ENCODE measurements at regions of chr15 and their contacts with region 1.

Region 1: DNA sequence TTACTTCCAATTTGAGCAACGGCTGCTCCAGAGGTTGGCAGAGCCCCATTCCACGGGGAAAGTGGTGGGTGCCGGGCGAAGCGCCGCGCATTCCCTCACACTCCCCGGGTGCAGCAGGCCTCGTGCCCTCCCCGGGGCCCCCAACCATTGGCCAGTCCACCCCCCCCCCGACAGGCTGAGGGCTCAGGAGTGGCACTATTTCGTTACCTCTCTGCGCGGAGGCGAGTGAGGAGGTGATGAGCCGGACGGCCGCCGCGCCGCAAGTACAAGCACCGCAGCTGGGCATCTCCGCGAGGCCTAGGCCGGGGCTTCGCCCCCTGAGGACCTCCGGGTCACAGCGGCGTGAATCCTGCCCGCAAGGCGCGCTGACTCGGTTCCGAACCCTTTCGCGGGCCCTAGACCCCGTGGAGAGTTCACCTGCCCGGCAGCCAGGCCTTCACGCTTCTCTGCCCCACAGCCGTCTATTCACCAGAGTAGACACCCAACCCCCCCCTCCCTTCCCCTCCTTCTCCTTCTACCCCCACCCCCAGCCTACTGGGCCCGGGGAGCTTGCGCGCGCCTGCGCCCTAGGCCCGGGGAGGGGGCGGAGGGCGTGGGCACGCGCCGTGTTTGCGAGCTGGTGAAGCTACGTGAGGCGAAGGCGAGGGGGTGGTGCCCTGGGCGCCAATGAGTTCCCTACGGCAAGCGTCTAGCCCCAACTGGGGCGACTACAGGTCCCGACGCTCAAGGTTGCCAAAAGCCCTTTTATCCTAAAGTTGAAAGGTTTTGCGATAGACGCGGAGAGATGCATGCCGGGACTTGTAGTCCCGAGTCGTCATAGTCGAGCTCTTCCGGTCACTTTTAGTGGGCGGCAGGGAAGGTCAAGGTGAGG is at the start of gene CLPX:
- DNase-seq: peak; percentile 88
- H3K4me3 Mint-ChIP-seq: peak within 1 kb of the TSS; percentile 96
- H3K27ac Mint-ChIP-seq: peak within 1 kb of the TSS; percentile 94
- H3K4me1 Mint-ChIP-seq: peaks cover 23% of the 10 kb centered on the region
- H3K27me3 Mint-ChIP-seq: no peaks in the 10 kb centered on the region
- total RNA-seq, gene CLPX: 62.7 to 69.9 TPM

Region 2: GRCh38 chr15:64515196-64515595 is 669.9 kb before region 1 on chr15:
- CTCF ChIA-PET with region 1: no interaction called
- intact Hi-C with region 1: no loop called
- DNase-seq: no peak
- H3K4me3 Mint-ChIP-seq: peak overlapping the region; percentile 61
- H3K27ac Mint-ChIP-seq: peak overlapping the region; percentile 75
- H3K4me1 Mint-ChIP-seq: peaks cover 70% of the 10 kb centered on the region
- H3K27me3 Mint-ChIP-seq: no peaks in the 10 kb centered on the region

Region 3: GRCh38 chr15:65008983-65009382 is 176.1 kb before region 1 on chr15:
- CTCF ChIA-PET with region 1: no interaction called
- intact Hi-C with region 1: no loop called
- DNase-seq: no peak
- H3K4me3 Mint-ChIP-seq: no peak overlapping the region
- H3K27ac Mint-ChIP-seq: no peak overlapping the region
- H3K4me1 Mint-ChIP-seq: no peaks in the 10 kb centered on the region
- H3K27me3 Mint-ChIP-seq: no peaks in the 10 kb centered on the region

Region 4: DNA sequence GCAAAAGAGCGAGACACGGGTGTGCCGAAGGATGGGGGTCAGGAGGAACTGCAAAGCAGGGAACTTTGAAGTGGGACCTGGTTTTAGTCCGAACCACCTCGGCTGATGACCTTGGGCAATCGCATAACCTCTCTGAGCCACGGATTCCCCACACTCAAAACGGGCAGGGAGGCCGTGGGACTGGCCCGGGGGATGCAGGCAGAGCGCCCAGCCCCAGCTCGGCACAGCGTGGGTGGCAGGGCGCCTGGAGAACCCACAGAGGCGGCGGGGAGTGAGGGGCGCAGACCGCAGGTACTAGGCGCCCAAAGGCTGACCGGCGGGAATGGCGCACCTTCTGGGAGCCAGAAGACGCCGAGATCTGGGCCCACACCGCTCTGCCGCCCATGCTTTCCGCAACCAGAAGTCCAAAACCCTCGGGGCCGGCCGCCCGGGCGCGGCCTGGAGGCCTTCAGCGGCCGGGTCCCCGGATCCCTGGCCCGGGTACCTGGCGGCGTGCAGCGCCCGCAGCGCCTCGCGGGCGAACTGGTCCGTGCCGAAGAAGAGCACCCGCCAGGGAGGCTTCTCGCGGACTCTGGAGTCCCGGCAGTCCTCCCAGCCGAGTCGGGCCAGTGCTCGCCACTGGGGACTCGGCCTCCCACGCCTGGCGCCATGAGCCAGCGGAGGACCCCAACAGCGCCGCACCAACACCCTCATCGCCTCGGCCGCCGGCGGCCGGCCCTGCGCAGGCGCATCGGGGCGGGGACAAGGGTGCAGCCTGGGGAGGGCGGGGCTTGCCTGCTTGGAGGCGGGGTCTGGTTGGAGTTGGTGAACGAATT is 156.0 kb before region 1 on chr15 and contains the start of gene MTFMT:
- CTCF ChIA-PET with region 1: interaction called, 3 read pairs
- intact Hi-C with region 1: loop called (anchors 2 kb)
- DNase-seq: peak; percentile 95
- H3K4me3 Mint-ChIP-seq: peak within 1 kb of the TSS; percentile 87
- H3K27ac Mint-ChIP-seq: peak within 1 kb of the TSS; percentile 7
- H3K4me1 Mint-ChIP-seq: peaks cover 21% of the 10 kb centered on the region
- H3K27me3 Mint-ChIP-seq: peaks cover 8% of the 10 kb centered on the region
- total RNA-seq, gene MTFMT: 15.1 to 17.1 TPM

Region 5: GRCh38 chr15:65249641-65250040 is 64.5 kb after region 1 on chr15:
- CTCF ChIA-PET with region 1: no interaction called
- intact Hi-C with region 1: loop called (anchors 1 kb)
- DNase-seq: peak; percentile 96
- H3K4me3 Mint-ChIP-seq: peak overlapping the region; percentile 4
- H3K27ac Mint-ChIP-seq: peak overlapping the region; percentile 78
- H3K4me1 Mint-ChIP-seq: peaks cover 24% of the 10 kb centered on the region
- H3K27me3 Mint-ChIP-seq: no peaks in the 10 kb centered on the region

Region 6: DNA sequence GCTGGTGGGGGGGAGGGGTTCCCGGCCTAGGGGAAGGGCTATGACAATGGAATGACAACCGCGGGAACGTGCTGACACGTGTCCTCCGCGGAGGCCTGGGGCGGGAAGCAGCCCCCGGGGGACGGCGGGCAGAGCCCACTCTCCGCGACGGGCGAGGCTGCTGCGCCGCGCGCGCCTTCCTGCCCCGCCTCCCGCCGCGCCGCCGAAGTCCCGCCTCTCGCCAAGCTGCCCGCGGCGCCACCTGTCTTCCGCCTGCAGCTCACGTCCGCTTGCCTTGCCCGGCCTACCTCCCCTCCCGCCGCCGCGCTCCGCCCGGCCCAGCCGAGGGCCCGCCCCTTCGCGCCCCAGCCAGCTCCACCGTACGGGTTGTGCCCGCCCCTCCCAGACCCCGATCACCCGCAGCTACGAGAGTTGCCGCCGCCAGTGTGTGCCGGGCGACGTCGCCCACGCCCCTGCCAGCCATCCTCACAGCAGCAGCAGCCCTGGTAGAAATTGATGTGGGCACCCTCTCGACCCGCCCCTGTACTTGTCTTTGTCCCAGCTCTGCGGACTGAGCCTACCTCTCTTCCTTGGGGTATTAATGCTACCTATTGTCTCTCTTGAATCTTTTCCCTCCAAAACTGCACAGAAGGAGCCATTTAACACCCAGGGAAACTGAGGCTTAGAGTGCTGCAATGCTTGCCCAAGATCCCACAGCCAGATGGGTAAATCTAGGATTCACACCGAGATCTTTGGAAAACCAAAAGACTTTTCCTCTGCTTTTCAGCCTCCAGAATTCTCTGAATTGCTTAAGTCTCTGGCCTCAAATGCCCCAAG is 101.8 kb after region 1 on chr15 and contains the start of gene PARP16:
- CTCF ChIA-PET with region 1: no interaction called
- intact Hi-C with region 1: loop called (anchors 1 kb)
- DNase-seq: peak; percentile 92
- H3K4me3 Mint-ChIP-seq: peak within 1 kb of the TSS; percentile 83
- H3K27ac Mint-ChIP-seq: peak within 1 kb of the TSS; percentile 82
- H3K4me1 Mint-ChIP-seq: peaks cover 32% of the 10 kb centered on the region
- H3K27me3 Mint-ChIP-seq: no peaks in the 10 kb centered on the region
- total RNA-seq, gene PARP16: 16.2 to 16.8 TPM

Region 7: GRCh38 chr15:65384895-65385858 is 200.1 kb after region 1 on chr15:
- CTCF ChIA-PET with region 1: no interaction called
- intact Hi-C with region 1: loop called (anchors 1 kb)
- DNase-seq: peak; percentile 92
- H3K4me3 Mint-ChIP-seq: peak overlapping the region; percentile 83
- H3K27ac Mint-ChIP-seq: peak overlapping the region; percentile 46
- H3K4me1 Mint-ChIP-seq: peaks cover 11% of the 10 kb centered on the region
- H3K27me3 Mint-ChIP-seq: peaks cover 9% of the 10 kb centered on the region

Measured in activated naive CD4-positive, alpha-beta T cell treated with anti-CD3 and anti-CD28 coated beads for 36 hours (primary cell).